Panc1 (cell line): ENCODE measurements at regions of chr2 and their contacts with region 1.

Region 1: DNA sequence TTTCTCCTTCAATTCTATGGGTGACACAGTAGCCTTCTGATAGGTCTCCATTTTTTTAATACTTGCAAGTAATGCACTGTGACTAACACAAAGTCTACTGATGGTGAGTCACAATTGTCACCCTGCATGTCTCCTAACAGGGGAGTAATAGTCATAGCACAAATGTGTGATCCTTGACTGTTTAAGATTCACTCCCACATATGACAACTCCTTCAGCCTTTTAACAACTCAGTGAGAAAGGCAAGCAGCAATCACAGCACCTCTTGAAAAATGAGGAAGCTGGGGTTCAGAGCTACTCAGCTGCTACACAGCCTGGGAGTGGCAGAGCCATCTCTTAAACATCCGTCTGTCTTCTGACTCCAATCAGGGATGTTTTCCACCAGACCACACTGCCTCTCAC is 63.8 kb downstream of the EHD3 start:
- DNase-seq: no peak
- ATAC-seq: no peak
- H3K4me3 ChIP-seq: no peak overlapping the region
- H3K27ac ChIP-seq: no peak overlapping the region
- H3K4me1 ChIP-seq: no peaks in the 10 kb centered on the region
- H3K27me3 ChIP-seq: no peaks in the 10 kb centered on the region
- CTCF ChIP-seq: no peak

Region 2: DNA sequence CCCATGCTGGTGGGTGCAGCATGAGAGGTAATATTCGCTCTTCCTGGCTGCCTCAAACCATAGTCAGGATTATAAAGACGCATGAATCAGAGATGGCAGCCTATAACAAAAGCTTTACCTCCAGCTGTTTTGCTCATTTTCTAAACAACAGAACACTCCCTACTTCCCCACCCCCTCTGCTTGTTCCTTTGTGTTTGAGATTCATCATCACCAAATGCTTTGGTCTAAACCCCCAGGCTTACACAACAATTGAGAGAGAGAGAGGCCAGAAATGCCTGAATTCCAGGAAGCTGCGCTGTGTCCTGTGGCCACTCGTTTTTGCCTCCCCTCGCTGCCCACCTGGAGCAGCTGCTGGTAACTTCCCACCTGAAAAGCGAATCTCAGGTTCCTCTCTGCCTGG is 411.7 kb before region 1 on chr2:
- CTCF ChIA-PET with region 1: interaction called, 13 read pairs
- POLR2A ChIA-PET with region 1: no interaction called
- in situ Hi-C with region 1: no loop called
- intact Hi-C with region 1: no loop called
- DNase-seq: no peak
- ATAC-seq: no peak
- H3K4me3 ChIP-seq: no peak overlapping the region
- H3K27ac ChIP-seq: no peak overlapping the region
- H3K4me1 ChIP-seq: no peaks in the 10 kb centered on the region
- H3K27me3 ChIP-seq: peaks cover 4% of the 10 kb centered on the region
- CTCF ChIP-seq: no peak

Region 3: GRCh38 chr2:31151501-31151900 is 146.2 kb before region 1 on chr2:
- CTCF ChIA-PET with region 1: no interaction called
- POLR2A ChIA-PET with region 1: no interaction called
- in situ Hi-C with region 1: no loop called
- intact Hi-C with region 1: no loop called
- DNase-seq: no peak
- ATAC-seq: no peak
- H3K4me3 ChIP-seq: no peak overlapping the region
- H3K27ac ChIP-seq: no peak overlapping the region
- H3K4me1 ChIP-seq: no peaks in the 10 kb centered on the region
- H3K27me3 ChIP-seq: peaks cover 11% of the 10 kb centered on the region
- CTCF ChIP-seq: peak; percentile 36; the same call in 1 of the 2 replicates